Testis (tissue), 5 donors: ENCODE measurements at regions of chr14 and their contacts with region 1.

Region 1: DNA sequence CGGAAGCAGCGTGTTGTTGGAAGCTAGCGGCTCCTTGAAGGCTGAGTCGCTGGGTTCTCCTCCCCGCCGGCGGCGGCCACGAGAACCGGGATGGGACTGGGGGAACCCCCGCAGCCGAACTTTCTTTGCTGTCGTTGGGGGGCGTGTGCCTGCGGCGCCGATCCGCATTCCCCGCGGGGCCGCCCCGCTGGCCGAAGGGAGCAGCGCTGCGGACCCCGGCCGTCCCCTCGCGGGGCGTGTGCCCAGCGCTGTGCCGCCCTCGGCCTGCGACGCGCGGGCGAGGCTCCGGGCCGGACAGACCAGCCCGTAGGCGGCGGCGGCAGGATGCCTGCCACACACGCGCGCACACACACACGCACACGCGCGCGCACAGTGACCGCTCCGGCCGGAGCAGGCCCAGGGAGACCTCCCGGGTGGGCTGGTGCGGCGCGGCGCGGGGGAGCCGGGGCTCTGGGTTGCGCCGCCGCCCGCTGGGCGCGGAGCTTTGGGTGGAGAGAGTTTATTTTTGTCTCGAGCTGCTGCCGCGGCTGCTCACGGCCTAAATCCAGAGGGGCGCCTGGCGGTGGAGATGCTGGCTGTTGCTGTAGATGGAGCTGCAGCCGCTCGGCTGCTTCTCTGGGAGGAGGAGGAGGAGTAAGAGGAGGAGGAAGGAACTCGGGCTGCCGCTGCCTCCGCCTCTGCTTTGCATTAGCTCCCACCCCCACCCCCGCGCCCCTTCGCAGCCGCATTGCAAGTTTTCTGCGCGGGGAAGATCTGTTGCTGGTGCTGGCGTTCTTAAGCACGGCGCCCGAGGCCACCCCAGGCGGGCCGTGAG is at the start of gene SAMD4A:
- DNase-seq: peak; percentile 77
- H3K4me3 ChIP-seq: peak within 1 kb of the TSS; percentile 73 to 82
- H3K27ac ChIP-seq: peak within 1 kb of the TSS; percentile 81 to 98
- H3K4me1 ChIP-seq: peaks cover 5% of the 10 kb centered on the region
- H3K27me3 ChIP-seq: no peaks in the 10 kb centered on the region
- CTCF ChIP-seq: peak in 2 of 3 experiments; percentile 9 to 29
- POLR2A ChIP-seq: no peak
- total RNA-seq, gene SAMD4A: 103 to 259 TPM

Region 2: GRCh38 chr14:54773171-54773975 is 206.8 kb after region 1 on chr14:
- intact Hi-C with region 1: loop called (anchors 5 kb)
- DNase-seq: peak; percentile 74
- H3K4me3 ChIP-seq: no peak overlapping the region
- H3K27ac ChIP-seq: peak overlapping the region; percentile 27 to 88
- H3K4me1 ChIP-seq: peaks cover 11% of the 10 kb centered on the region
- H3K27me3 ChIP-seq: no peaks in the 10 kb centered on the region
- CTCF ChIP-seq: peak; percentile 51 to 82 (median 81)
- POLR2A ChIP-seq: no peak